Left lung (tissue), 14 donors: ENCODE measurements at regions of chr3 and their contacts with region 1.

Region 1: DNA sequence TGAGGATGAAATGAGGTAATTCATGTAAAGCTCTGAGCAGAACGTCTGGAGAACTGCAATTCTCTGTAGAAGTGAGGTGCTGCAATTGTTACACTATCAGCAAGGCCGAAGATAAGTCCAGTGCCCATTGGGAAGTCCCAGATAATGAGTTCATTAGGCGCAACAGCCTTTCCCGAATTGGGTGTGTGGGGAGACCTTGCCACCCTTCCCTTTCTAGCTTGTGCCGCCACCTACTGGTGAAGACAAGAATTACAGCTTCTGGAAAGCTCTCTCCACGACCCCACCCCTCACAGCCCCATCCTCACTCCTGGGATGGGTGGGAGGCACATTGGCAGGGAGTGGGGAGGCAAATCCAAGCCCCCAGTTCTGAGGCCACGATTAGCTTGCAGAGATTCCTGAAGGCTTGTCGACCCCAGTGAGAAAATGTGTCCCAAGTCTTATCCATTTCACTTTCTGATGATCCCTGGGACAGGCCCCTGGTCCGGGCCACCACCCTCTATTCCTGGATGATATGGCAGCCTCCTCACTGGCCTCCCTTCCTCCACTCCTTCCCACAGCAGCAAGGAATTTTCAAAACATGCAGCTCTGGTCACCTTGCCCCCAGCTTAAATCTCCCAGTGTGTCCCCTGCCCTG is 36.4 kb downstream of the FAM3D start:
- DNase-seq: peak in 3 of 4 donors; percentile 51 to 62 (median 57)
- ATAC-seq: peak; percentile 81
- H3K4me3 ChIP-seq: no peak overlapping the region
- H3K27ac ChIP-seq: no peak overlapping the region
- H3K4me1 ChIP-seq: peaks cover 18 to 27% of the 10 kb centered on the region in 2 donors
- H3K27me3 ChIP-seq: no peaks in the 10 kb centered on the region
- CTCF ChIP-seq: peak; percentile 88 to 89

Region 2: GRCh38 chr3:58573640-58574039 is 56.6 kb before region 1 on chr3:
- intact Hi-C with region 1: loop called in 1 of 2 experiments (anchors 5 kb)
- DNase-seq: peak in 2 of 4 donors; percentile 64 to 78
- ATAC-seq: no peak
- H3K4me3 ChIP-seq: no peak overlapping the region
- H3K27ac ChIP-seq: no peak overlapping the region
- H3K4me1 ChIP-seq: peaks cover 4 to 26% of the 10 kb centered on the region in 2 donors
- H3K27me3 ChIP-seq: no peaks in the 10 kb centered on the region
- CTCF ChIP-seq: no peak

Region 3: GRCh38 chr3:59049671-59050331 is 419.6 kb after region 1 on chr3 and contains the start of gene CFAP20DC:
- intact Hi-C with region 1: loop called in 1 of 2 experiments (anchors 10 kb)
- DNase-seq: peak; percentile 92 to 98 (median 93)
- ATAC-seq: peak; percentile 100
- H3K4me3 ChIP-seq: peak within 1 kb of the TSS; percentile 45 to 57
- H3K27ac ChIP-seq: peak within 1 kb of the TSS in 1 of 2 donors; percentile 43
- H3K4me1 ChIP-seq: peaks cover 0 to 5% of the 10 kb centered on the region in 2 donors
- H3K27me3 ChIP-seq: no peaks in the 10 kb centered on the region
- CTCF ChIP-seq: no peak
- polyA plus RNA-seq, gene CFAP20DC: 4.9 to 7.7 (median 6.6) TPM